MCF 10A (cell line): ENCODE measurements at regions of chr22 and their contacts with region 1.

Region 1: GRCh38 chr22:29154364-29155048 is 51.2 kb upstream of the EMID1 start:
- DNase-seq: peak; percentile 66
- H3K4me3 Mint-ChIP-seq: no peak overlapping the region
- H3K27ac Mint-ChIP-seq: no peak overlapping the region
- H3K4me1 Mint-ChIP-seq: peaks cover 6% of the 10 kb centered on the region
- H3K27me3 Mint-ChIP-seq: peaks cover under 1% of the 10 kb centered on the region
- CTCF ChIP-seq: peak; percentile 86

Region 2: DNA sequence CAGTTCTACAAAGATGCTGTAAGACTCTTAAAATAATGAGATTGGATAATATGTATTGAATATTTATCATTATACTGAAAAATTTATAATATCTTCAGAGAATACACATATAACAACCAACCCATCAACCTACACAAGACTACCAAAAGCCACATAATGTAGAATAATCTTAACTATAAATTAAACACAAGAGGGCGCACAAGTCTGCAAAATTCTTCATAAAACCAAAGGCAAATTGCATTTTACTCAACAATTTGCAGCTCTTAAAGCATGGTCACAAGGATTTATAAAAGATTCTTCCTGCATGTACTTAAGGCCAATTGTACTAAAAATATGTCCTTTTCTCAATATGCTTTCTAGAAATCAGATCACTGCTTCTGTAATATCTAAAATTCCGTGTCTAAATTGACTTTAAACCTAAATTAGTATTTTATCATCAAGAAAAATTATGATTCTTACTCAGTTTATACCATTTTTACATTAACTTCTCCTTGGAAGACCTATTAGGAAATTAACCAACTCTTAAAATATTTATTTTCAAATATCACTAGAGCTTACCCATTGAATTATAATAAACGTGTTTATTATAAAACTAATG is 553.9 kb before region 1 on chr22:
- CTCF ChIA-PET with region 1: interaction called, 4 read pairs
- POLR2A ChIA-PET with region 1: no interaction called
- intact Hi-C with region 1: loop called (anchors 10 kb)
- DNase-seq: peak; percentile 56
- H3K4me3 Mint-ChIP-seq: no peak overlapping the region
- H3K27ac Mint-ChIP-seq: no peak overlapping the region
- H3K4me1 Mint-ChIP-seq: no peaks in the 10 kb centered on the region
- H3K27me3 Mint-ChIP-seq: peaks cover 21% of the 10 kb centered on the region
- CTCF ChIP-seq: peak; percentile 41

Region 3: DNA sequence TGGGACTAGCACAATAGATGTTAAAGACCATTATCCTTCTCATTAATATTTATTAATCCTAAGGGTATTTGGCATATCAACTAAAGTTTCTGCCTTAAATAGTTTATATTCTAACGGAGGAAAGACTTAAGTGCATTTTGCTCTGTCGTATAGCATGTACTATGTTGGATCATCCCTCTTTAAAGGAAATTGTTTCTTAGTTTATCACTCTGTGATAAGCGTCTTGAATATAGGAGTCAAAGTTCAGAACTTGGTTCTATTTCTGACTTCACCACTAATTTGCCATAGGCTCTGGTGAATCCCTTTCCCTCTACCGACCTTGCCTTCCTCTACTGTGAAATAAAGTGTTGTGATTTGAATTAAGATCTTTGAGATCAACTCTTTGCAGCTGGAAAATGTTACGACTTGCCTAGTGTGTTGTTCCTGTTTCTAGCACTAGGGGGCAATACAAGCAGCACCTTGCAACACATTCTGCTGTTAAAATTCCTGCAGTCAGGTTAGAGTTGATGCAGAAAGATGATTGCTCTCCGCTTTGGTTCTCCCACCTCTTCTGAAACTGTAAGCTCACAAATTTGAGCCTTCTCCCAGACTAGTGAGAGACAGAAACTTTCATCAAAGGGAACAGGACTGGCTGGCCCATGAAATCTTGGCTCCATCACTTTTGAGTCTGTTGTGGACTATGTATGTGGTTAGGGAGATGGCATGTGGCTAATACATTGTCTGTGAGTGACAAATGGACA is 299.0 kb before region 1 on chr22:
- CTCF ChIA-PET with region 1: interaction called, 6 read pairs
- POLR2A ChIA-PET with region 1: no interaction called
- intact Hi-C with region 1: loop called (anchors 1 kb)
- DNase-seq: peak; percentile 67
- H3K4me3 Mint-ChIP-seq: no peak overlapping the region
- H3K27ac Mint-ChIP-seq: no peak overlapping the region
- H3K4me1 Mint-ChIP-seq: peaks cover 7% of the 10 kb centered on the region
- H3K27me3 Mint-ChIP-seq: peaks cover 11% of the 10 kb centered on the region
- CTCF ChIP-seq: peak; percentile 89

Region 4: GRCh38 chr22:29072193-29072978 is 82.1 kb before region 1 on chr22:
- CTCF ChIA-PET with region 1: no interaction called
- POLR2A ChIA-PET with region 1: no interaction called
- intact Hi-C with region 1: loop called (anchors 10 kb)
- DNase-seq: peak; percentile 92
- H3K4me3 Mint-ChIP-seq: peak overlapping the region; percentile 71
- H3K27ac Mint-ChIP-seq: no peak overlapping the region
- H3K4me1 Mint-ChIP-seq: peaks cover 6% of the 10 kb centered on the region
- H3K27me3 Mint-ChIP-seq: no peaks in the 10 kb centered on the region
- CTCF ChIP-seq: no peak

Region 5: GRCh38 chr22:29124777-29125442 is 29.6 kb before region 1 on chr22:
- CTCF ChIA-PET with region 1: no interaction called
- POLR2A ChIA-PET with region 1: no interaction called
- intact Hi-C with region 1: no loop called
- DNase-seq: no peak
- H3K4me3 Mint-ChIP-seq: no peak overlapping the region
- H3K27ac Mint-ChIP-seq: no peak overlapping the region
- H3K4me1 Mint-ChIP-seq: peaks cover 1% of the 10 kb centered on the region
- H3K27me3 Mint-ChIP-seq: peaks cover 4% of the 10 kb centered on the region
- CTCF ChIP-seq: no peak

Region 6: GRCh38 chr22:29138556-29139305 is 15.8 kb before region 1 on chr22:
- CTCF ChIA-PET with region 1: interaction called, 21 read pairs
- POLR2A ChIA-PET with region 1: no interaction called
- intact Hi-C with region 1: no loop called
- DNase-seq: no peak
- H3K4me3 Mint-ChIP-seq: no peak overlapping the region
- H3K27ac Mint-ChIP-seq: no peak overlapping the region
- H3K4me1 Mint-ChIP-seq: no peaks in the 10 kb centered on the region
- H3K27me3 Mint-ChIP-seq: no peaks in the 10 kb centered on the region
- CTCF ChIP-seq: no peak

Region 7: GRCh38 chr22:29143941-29144785 is 10.3 kb before region 1 on chr22:
- CTCF ChIA-PET with region 1: interaction called, 21 read pairs
- POLR2A ChIA-PET with region 1: no interaction called
- intact Hi-C with region 1: no loop called
- DNase-seq: no peak
- H3K4me3 Mint-ChIP-seq: no peak overlapping the region
- H3K27ac Mint-ChIP-seq: no peak overlapping the region
- H3K4me1 Mint-ChIP-seq: no peaks in the 10 kb centered on the region
- H3K27me3 Mint-ChIP-seq: no peaks in the 10 kb centered on the region
- CTCF ChIP-seq: no peak

Region 8: DNA sequence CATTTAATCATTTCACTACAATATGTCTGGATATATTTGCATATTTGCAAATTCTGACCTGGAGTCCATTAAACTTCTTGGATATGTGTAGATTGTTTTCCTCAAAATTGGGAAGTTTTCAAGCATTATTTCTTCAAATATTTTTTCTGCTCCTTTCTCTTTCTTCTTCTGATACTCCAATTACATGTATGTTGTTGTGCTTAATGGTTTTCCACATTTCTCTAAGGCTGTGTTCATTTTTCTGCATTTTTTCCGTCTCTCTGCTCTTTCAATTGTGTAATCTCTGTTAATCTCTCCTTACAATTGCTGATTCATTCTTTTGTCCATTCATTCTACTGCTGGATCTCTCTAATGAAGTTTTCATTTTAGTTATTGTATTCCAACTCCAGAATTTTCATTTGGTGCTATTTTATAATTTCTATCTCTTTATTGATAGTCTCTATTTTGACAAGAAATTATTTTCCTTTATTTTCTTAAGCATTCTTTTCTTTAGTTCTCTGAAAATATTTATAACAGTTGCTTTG is 20.9 kb after region 1 on chr22:
- CTCF ChIA-PET with region 1: interaction called, 10 read pairs
- POLR2A ChIA-PET with region 1: no interaction called
- intact Hi-C with region 1: no loop called
- DNase-seq: no peak
- H3K4me3 Mint-ChIP-seq: no peak overlapping the region
- H3K27ac Mint-ChIP-seq: no peak overlapping the region
- H3K4me1 Mint-ChIP-seq: no peaks in the 10 kb centered on the region
- H3K27me3 Mint-ChIP-seq: peaks cover 27% of the 10 kb centered on the region
- CTCF ChIP-seq: no peak

Region 9: GRCh38 chr22:29306175-29306834 is 151.8 kb after region 1 on chr22 and contains the start of gene GAS2L1:
- CTCF ChIA-PET with region 1: no interaction called
- POLR2A ChIA-PET with region 1: no interaction called
- intact Hi-C with region 1: no loop called
- DNase-seq: peak; percentile 81
- H3K4me3 Mint-ChIP-seq: peak within 1 kb of the TSS; percentile 88
- H3K27ac Mint-ChIP-seq: no peak within 1 kb of the TSS
- H3K4me1 Mint-ChIP-seq: peaks cover 18% of the 10 kb centered on the region
- H3K27me3 Mint-ChIP-seq: no peaks in the 10 kb centered on the region
- CTCF ChIP-seq: peak; percentile 57
- total RNA-seq, gene GAS2L1: 15.3 and 17.2 TPM in 2 replicates